HepG2 (cell line): ENCODE measurements at regions of chr1 and their contacts with region 1.

Region 1: DNA sequence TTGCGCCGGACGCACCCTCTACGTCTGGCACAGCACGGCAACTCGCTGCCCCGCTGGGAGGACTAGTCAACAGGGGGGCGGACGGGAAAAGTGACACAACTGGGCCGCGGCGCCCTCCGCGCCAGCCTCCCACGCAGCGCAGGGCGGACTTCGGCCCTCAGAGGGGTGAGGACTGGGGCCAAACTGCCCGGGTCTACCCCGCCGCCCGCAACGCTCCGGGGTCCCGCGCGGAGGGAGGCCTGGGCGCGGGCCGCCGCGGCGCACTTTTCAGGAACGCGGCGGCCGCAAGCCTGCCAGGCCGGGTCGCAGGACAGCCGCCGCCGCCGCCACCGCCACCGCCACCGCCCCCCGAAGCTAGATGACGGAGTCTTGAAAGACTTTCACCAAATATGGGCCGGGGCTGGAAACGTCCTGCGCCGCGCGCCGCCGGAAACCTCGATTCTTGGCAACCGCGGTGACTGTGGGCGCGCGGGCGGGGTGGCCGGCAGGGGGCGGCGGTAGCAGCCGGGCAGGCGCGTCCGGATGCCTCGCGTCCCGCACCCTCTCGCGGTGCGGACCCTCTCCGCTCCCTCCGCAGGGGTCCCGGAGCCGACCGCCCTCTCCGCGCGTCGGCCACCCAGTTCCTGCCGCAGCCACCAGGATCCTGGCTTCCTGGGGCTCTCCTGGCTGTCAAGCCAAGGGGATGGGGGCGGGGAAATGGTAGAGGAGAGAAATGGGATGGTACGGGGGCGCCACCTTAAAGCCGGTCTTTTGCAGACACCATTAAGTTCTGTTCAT is 3.7 kb upstream of the CCN1 start:
- DNase-seq: peak; percentile 37
- ATAC-seq: peak; percentile 66
- H3K4me3 ChIP-seq: peak overlapping the region; percentile 63 to 90 (median 78)
- H3K27ac ChIP-seq: no peak overlapping the region
- H3K4me1 ChIP-seq: peaks cover 55% of the 10 kb centered on the region
- H3K27me3 ChIP-seq: peaks cover 0 to 25% of the 10 kb centered on the region in 2 experiments; a peak in 4 of 5 replicates
- CTCF ChIP-seq: peak; percentile 69
- EP300 ChIP-seq: no peak
- POLR2A ChIP-seq: 0 out of 4 replicates have a peak, but pooled peaks of 1 of the 2 experiments have one; percentile 15
- RAD21 ChIP-seq: peak; percentile 68

Region 2: GRCh38 chr1:85328713-85329376 is 248.0 kb before region 1 on chr1:
- CTCF ChIA-PET with region 1: no interaction called
- POLR2A ChIA-PET with region 1: interaction called, 6 read pairs
- in situ Hi-C with region 1: loop called (anchors 5 kb)
- intact Hi-C with region 1: loop called (anchors 5 kb)
- DNase-seq: peak; percentile 97
- ATAC-seq: peak; percentile 97
- H3K4me3 ChIP-seq: no peak overlapping the region
- H3K27ac ChIP-seq: peak overlapping the region; percentile 83
- H3K4me1 ChIP-seq: peaks cover 62% of the 10 kb centered on the region
- H3K27me3 ChIP-seq: no peaks in the 10 kb centered on the region
- CTCF ChIP-seq: no peak
- EP300 ChIP-seq: peak; percentile 27 to 95; a peak in 2 of 4 replicates
- POLR2A ChIP-seq: no peak
- RAD21 ChIP-seq: no peak

Region 3: DNA sequence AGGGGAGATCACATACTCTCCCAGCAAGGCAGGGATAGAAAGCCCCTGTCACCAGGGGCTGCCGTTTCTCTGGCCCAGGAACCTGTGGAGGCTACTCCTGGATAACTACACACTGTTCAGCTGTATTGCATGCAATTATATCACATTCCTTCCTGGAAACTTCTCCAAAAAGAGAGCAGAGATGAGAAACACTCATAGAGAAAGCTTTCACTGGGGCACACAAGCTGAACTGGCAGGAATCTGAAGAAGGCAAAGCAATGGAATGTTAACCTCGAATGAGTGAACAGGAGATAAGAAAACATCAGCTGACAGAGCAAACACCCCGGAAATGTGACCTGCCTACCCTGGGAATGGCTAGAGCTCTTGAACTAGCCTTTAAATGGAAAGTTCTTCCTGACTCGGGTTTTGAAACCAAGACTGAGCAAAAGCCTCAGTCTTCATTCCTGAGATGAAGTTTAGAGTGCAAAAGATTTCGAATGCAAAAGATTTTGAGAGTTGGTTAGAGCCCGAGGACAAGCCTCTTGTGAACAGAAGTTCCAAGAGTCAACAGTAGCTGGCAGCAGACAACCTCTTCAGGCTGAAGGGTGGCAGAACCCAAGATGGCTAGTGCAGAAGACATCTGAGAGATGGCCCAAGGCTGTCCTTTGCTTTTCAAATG is 36.0 kb after region 1 on chr1:
- CTCF ChIA-PET with region 1: interaction called, 3 read pairs
- POLR2A ChIA-PET with region 1: interaction called, 58 read pairs
- in situ Hi-C with region 1: no loop called
- intact Hi-C with region 1: loop called (anchors 2 kb)
- DNase-seq: peak; percentile 85
- ATAC-seq: peak; percentile 92
- H3K4me3 ChIP-seq: peak overlapping the region; percentile 30 to 44 (median 30); a peak in 4 of 6 replicates
- H3K27ac ChIP-seq: peak overlapping the region; percentile 51
- H3K4me1 ChIP-seq: peaks cover 23% of the 10 kb centered on the region
- H3K27me3 ChIP-seq: no peaks in the 10 kb centered on the region
- CTCF ChIP-seq: peak; percentile 72
- EP300 ChIP-seq: no peak
- POLR2A ChIP-seq: peak in 1 of 2 experiments; percentile 31; a peak in 1 of 4 replicates
- RAD21 ChIP-seq: peak; percentile 66

Region 4: DNA sequence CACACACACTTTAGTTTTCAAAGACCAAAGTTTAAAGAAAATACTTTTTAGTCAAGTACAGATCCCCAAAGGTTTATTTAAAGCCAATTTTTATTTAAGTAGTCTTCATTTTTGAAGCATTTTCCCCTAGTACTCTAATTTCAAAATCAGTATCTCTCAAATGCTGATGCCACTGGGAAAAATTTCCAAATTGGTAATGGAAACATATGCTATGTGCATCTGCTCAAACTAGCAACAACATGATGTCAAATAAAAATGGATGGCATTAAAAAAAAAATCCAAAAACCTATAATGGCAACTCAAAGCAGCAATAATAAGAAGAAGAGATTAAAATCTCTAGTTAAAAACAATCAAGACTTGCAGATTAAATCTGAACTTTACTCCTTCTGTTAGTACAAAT is 72.8 kb after region 1 on chr1:
- CTCF ChIA-PET with region 1: no interaction called
- POLR2A ChIA-PET with region 1: no interaction called
- in situ Hi-C with region 1: no loop called
- intact Hi-C with region 1: loop called (anchors 5 kb)
- DNase-seq: no peak
- ATAC-seq: no peak
- H3K4me3 ChIP-seq: no peak overlapping the region
- H3K27ac ChIP-seq: no peak overlapping the region
- H3K4me1 ChIP-seq: peaks cover 5% of the 10 kb centered on the region; the same call in 1 of the 2 replicates
- H3K27me3 ChIP-seq: no peaks in the 10 kb centered on the region
- CTCF ChIP-seq: no peak
- EP300 ChIP-seq: no peak
- POLR2A ChIP-seq: no peak
- RAD21 ChIP-seq: no peak

Region 5: GRCh38 chr1:85707990-85708828 is 131.4 kb after region 1 on chr1 and contains the start of gene ZNHIT6:
- CTCF ChIA-PET with region 1: no interaction called
- POLR2A ChIA-PET with region 1: interaction called, 10 read pairs
- in situ Hi-C with region 1: no loop called
- intact Hi-C with region 1: loop called (anchors 5 kb)
- DNase-seq: peak; percentile 95
- ATAC-seq: peak; percentile 96
- H3K4me3 ChIP-seq: peak within 1 kb of the TSS; percentile 67 to 84 (median 77)
- H3K27ac ChIP-seq: peak within 1 kb of the TSS; percentile 83
- H3K4me1 ChIP-seq: peaks cover 34% of the 10 kb centered on the region
- H3K27me3 ChIP-seq: no peaks in the 10 kb centered on the region; a peak in 1 of 5 replicates
- CTCF ChIP-seq: peak; percentile 53
- EP300 ChIP-seq: peak in 1 of 2 experiments; percentile 27; a peak in 1 of 4 replicates
- POLR2A ChIP-seq: peak; percentile 68 to 80
- RAD21 ChIP-seq: 0 out of 2 replicates have a peak, but pooled peaks have one; percentile 51
- total RNA-seq, gene ZNHIT6: 15.2 and 18.8 TPM in 2 replicates

Region 6: DNA sequence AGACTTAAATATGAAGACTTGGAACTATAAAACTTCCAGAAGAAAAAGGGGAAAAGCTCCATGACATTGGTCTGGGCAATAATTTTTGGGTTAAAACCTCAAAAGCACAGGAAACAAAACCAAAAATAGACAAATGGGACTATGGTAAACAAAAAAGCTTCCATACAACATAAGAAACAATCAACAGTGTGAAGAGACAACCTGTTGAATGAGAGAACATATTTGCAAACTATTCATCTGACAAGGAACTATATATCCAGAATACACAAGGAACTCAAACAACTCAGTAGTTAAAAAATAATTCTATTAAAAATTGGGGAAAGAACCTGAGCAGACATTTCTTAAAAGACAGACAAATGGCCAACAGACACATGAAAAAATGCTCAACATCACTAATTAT is 324.1 kb after region 1 on chr1:
- CTCF ChIA-PET with region 1: no interaction called
- POLR2A ChIA-PET with region 1: no interaction called
- in situ Hi-C with region 1: no loop called
- intact Hi-C with region 1: no loop called
- DNase-seq: no peak
- ATAC-seq: no peak
- H3K4me3 ChIP-seq: no peak overlapping the region
- H3K27ac ChIP-seq: no peak overlapping the region
- H3K4me1 ChIP-seq: no peaks in the 10 kb centered on the region
- H3K27me3 ChIP-seq: no peaks in the 10 kb centered on the region
- CTCF ChIP-seq: no peak
- EP300 ChIP-seq: no peak
- POLR2A ChIP-seq: no peak
- RAD21 ChIP-seq: no peak